ENCODE measurements at regions of chr1 and their contacts with region 1.

Region 1: GRCh38 chr1:3101124-3101939 is 32.3 kb downstream of the PRDM16 start:
- DNase-seq: no peak
- H3K4me3 ChIP-seq: no peak overlapping the region
- H3K27ac ChIP-seq: no peak overlapping the region
- H3K4me1 ChIP-seq: peaks cover 2 to 55% (median 23%) of the 10 kb centered on the region in 4 experiments
- H3K27me3 ChIP-seq: no peaks in the 10 kb centered on the region

Region 2: DNA sequence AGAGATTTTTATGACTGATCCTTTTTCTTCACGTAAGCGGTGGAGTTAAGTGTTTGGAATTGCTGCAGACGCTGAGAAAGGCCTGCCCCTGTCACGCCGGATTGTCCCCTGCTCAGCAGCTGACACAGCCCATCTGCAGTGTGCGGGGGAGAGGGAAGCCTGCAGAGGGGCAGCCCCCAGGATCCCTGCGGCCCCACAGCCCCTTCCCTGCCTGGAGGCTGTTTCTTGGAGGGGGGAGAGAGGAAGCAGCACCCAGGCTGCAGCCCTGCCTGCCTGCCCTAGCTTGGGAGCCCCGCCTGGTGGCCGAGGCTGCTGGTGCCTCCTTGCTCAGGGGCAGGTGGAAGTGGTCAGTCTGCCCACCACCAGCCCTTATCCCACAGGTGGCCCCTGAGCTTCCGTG is 18.4 kb after region 1 on chr1:
- CTCF ChIA-PET with region 1: interaction called, 13 read pairs
- POLR2A ChIA-PET with region 1: no interaction called
- DNase-seq: no peak
- H3K4me3 ChIP-seq: no peak overlapping the region
- H3K27ac ChIP-seq: no peak overlapping the region
- H3K4me1 ChIP-seq: peaks cover 0 to 13% (median 5%) of the 10 kb centered on the region in 4 experiments
- H3K27me3 ChIP-seq: no peaks in the 10 kb centered on the region